ENCODE measurements at regions of chr9 and their contacts with region 1.

Region 1: DNA sequence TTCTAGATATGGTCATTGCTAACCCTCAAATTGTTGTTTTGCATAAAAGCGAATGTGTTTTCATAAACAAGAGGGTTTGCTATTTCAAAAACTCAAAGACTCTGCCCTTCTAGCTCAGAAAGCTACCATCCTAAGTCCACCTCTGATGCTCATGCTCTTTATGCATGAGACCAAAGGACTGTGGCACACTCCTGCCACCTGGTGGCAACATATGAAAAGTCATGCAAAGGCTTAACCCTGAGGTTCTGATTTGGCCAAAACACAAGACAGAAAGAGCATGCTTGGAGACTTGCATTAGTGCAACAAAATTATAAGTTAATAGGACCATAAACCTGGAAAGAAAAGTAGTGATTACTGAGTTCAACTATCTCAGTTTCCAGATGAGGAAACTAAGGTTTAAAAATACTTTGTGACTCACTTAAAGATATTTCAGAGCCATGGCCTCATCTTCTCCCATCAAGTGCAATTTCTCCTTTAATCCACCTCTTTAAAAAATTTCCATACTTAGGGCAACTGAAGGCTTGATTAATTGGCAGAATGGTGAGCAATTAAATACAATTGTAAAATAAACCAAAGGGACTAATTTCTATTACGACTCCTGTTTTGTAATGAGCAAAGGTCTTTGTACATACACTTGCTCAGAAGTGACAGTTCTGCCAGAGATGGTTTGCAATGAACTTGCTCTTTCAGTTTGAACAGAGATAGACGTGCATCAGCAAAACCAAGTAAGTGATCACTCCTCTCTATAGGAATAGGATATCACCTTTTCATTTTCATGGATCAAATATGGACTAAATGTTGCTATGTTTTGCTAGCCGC is 110.7 kb upstream of the RAD23B start:
- DNase-seq: peak; percentile 90
- H3K4me3 ChIP-seq: no peak overlapping the region
- H3K27ac ChIP-seq: no peak overlapping the region
- H3K4me1 ChIP-seq: peaks cover 7 to 27% (median 17%) of the 10 kb centered on the region in 4 donors
- H3K27me3 ChIP-seq: no peaks in the 10 kb centered on the region
- CTCF ChIP-seq: peak; percentile 84 to 88 (median 87)
- EP300 ChIP-seq: no peak
- POLR2A ChIP-seq: no peak

Region 2: DNA sequence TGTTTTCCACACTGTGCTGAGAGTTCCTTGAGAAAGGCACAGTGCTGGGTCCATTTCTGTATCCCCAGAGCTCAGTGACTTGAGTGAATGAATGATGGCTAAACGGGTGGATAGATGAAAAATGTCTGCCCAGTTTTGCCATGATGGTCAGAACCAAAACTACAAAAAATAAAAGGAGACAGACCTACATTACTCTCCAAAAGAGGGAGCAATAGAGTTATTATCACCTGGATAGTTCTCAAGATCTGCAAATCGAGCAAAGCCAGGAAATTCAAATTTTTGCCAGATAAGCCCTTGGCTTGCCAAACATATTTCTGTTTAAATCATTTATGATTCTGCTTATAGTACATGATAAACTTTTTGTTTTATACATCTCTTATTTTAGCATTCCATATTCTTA is 523.6 kb before region 1 on chr9:
- intact Hi-C with region 1: loop called (anchors 5 kb)
- DNase-seq: no peak
- H3K4me3 ChIP-seq: no peak overlapping the region
- H3K27ac ChIP-seq: no peak overlapping the region
- H3K4me1 ChIP-seq: peaks cover 0 to 3% (median 0%) of the 10 kb centered on the region in 4 donors
- H3K27me3 ChIP-seq: no peaks in the 10 kb centered on the region
- CTCF ChIP-seq: peak; percentile 29 to 48 (median 42)
- EP300 ChIP-seq: no peak
- POLR2A ChIP-seq: no peak

Region 3: GRCh38 chr9:107020040-107020530 is 152.3 kb before region 1 on chr9:
- intact Hi-C with region 1: loop called (anchors 10 kb)
- DNase-seq: peak; percentile 88
- H3K4me3 ChIP-seq: no peak overlapping the region
- H3K27ac ChIP-seq: peak overlapping the region; percentile 60 to 71 (median 68)
- H3K4me1 ChIP-seq: peaks cover 12 to 32% (median 27%) of the 10 kb centered on the region in 4 donors
- H3K27me3 ChIP-seq: no peaks in the 10 kb centered on the region
- CTCF ChIP-seq: no peak
- EP300 ChIP-seq: no peak
- POLR2A ChIP-seq: no peak

Measured in esophagus muscularis mucosa (tissue), 4 donors.